BJ (cell line): ENCODE measurements at regions of chr12 and their contacts with region 1.

Region 1: DNA sequence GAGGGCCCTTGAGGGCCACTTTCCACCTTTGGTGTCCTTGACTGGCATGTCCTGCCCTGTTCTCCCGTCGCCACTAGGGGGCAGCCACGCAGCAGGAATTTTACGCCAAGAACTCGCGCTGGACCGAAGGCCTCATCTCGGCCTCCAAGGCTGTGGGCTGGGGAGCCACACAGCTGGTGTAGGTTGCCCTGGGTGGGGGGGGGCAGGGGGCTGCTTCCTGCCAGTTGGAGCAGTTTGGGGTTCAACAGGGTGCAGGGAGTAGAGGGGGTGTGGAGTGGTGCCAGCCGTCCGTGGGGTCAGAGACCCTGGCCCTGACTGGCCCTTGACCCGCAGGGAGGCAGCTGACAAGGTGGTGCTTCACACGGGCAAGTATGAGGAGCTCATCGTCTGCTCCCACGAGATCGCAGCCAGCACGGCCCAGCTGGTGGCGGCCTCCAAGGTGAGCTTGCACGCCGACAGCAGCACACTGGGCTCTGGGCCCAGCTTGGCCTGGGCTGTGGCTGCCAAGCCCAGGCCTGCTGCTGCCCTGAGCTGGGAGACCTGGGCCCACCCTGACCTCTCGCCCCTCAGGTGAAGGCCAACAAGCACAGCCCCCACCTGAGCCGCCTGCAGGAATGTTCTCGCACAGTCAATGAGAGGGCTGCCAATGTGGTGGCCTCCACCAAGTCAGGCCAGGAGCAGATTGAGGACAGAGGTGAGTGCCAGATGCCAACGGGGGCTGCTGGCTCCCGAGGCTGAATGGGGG is 25.3 kb downstream of the HIP1R start:
- DNase-seq: no peak
- H3K4me3 ChIP-seq: no peak overlapping the region
- H3K27me3 ChIP-seq: no peaks in the 10 kb centered on the region
- CTCF ChIP-seq: peak; percentile 92

Region 2: GRCh38 chr12:122459211-122459610 is 401.3 kb before region 1 on chr12:
- CTCF ChIA-PET with region 1: no interaction called
- POLR2A ChIA-PET with region 1: no interaction called
- DNase-seq: no peak
- H3K4me3 ChIP-seq: no peak overlapping the region
- H3K27me3 ChIP-seq: no peaks in the 10 kb centered on the region
- CTCF ChIP-seq: no peak

Region 3: GRCh38 chr12:122841544-122842321 is 18.8 kb before region 1 on chr12:
- CTCF ChIA-PET with region 1: interaction called, 26 read pairs
- POLR2A ChIA-PET with region 1: no interaction called
- DNase-seq: no peak
- H3K4me3 ChIP-seq: no peak overlapping the region
- H3K27me3 ChIP-seq: no peaks in the 10 kb centered on the region
- CTCF ChIP-seq: no peak

Region 4: GRCh38 chr12:122871851-122872780 is 11.6 kb after region 1 on chr12:
- CTCF ChIA-PET with region 1: interaction called, 50 read pairs
- POLR2A ChIA-PET with region 1: no interaction called
- DNase-seq: no peak
- H3K4me3 ChIP-seq: peak overlapping the region; percentile 30
- H3K27me3 ChIP-seq: no peaks in the 10 kb centered on the region
- CTCF ChIP-seq: no peak

Region 5: GRCh38 chr12:122951979-122952892 is 91.7 kb after region 1 on chr12:
- CTCF ChIA-PET with region 1: interaction called, 275 read pairs
- POLR2A ChIA-PET with region 1: no interaction called
- DNase-seq: no peak
- H3K4me3 ChIP-seq: no peak overlapping the region
- H3K27me3 ChIP-seq: no peaks in the 10 kb centered on the region
- CTCF ChIP-seq: peak; percentile 94

Region 6: DNA sequence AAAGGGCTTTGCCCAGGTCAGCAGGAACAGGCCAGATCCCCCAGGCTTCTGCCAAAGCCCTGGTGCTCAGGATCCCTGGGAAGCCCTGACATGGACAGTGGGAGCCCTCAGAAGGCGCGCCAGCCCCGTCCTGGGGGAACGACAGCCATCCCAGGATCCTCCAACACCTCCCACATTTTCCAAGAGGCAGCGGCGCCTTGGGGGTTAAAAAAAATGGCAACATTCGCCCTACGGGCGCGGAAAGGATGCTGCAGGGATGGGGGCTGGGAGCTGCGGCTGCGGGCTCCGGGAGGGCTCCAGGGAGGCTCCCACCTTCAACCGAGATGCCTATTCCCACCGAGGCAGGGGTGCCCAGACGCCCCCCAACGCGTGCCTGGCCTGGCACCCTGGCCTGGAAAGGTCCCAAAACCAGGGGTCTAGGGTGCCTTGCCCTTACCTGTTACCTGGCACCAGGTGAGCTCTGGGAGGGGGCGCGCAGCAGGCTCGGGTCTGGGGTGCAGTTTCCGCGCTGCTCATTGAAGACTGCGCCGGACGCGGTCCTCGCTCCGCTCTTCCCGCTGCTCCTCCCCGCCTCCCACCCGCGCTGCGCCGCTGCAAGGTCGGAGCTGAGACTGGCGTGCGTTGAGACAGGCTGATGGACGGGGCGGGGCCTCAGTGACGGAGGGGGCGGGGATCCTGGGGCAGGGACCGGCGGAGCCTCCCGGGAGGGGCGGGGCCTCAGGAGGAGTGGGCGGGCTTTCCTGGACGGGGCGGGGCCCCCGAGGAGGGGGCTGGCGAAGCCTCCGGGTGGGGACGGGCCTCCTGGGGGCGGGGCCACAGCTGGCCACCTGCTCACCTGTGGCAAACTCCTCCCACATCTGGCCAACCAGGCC is 105.6 kb after region 1 on chr12 and contains the start of gene ABCB9:
- CTCF ChIA-PET with region 1: interaction called, 15 read pairs
- POLR2A ChIA-PET with region 1: no interaction called
- DNase-seq: no peak
- H3K4me3 ChIP-seq: peak within 1 kb of the TSS; percentile 74
- H3K27me3 ChIP-seq: no peaks in the 10 kb centered on the region
- CTCF ChIP-seq: 0 out of 2 replicates have a peak, but pooled peaks have one; percentile 8
- polyA plus RNA-seq, gene ABCB9: 3.9 and 6.1 TPM in 2 replicates

Region 7: DNA sequence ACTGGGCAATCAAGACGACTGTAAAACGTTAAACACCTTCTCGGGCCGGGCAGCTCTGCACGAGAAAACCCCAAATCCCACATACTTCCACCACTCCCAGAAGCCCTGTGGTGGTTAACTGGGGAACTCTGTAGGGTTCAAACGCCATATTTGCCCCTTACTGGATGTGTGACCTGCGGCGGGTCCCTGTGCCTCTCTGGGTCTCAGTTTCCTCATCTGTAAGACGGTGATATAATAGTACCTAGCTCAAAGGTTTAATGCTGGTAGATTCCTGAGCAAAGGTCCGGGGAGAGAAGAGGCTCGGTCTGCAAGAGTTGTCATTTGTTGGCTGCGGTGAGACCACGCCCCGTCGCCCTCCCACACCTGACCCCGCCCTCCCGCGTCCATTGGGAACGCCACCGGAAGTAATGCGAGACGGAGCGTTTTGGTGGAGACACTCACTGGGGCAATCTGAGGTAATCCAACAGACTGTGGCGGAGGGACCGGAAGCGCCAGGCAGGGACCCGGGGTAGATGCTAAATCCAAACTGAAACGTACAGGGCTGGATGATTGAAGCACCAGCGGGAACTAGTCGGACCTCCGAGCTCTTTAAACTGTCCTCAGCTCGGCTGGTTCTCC is 113.9 kb after region 1 on chr12:
- CTCF ChIA-PET with region 1: interaction called, 13 read pairs
- POLR2A ChIA-PET with region 1: no interaction called
- DNase-seq: peak; percentile 85
- H3K4me3 ChIP-seq: peak overlapping the region; percentile 97
- H3K27me3 ChIP-seq: no peaks in the 10 kb centered on the region
- CTCF ChIP-seq: no peak

Region 8: GRCh38 chr12:123232807-123233543 is 372.5 kb after region 1 on chr12 and contains the starts of genes MPHOSPH9 and MTRFR:
- CTCF ChIA-PET with region 1: interaction called, 21 read pairs
- POLR2A ChIA-PET with region 1: no interaction called
- DNase-seq: peak; percentile 98
- H3K4me3 ChIP-seq: peak within 1 kb of the TSS; percentile 85
- H3K27me3 ChIP-seq: no peaks in the 10 kb centered on the region
- CTCF ChIP-seq: no peak
- polyA plus RNA-seq, gene MPHOSPH9: 7.6 and 13.1 TPM in 2 replicates
- polyA plus RNA-seq, gene MTRFR: 11.6 and 12.7 TPM in 2 replicates